ENCODE measurements at regions of chr4 and their contacts with region 1.

Region 1: DNA sequence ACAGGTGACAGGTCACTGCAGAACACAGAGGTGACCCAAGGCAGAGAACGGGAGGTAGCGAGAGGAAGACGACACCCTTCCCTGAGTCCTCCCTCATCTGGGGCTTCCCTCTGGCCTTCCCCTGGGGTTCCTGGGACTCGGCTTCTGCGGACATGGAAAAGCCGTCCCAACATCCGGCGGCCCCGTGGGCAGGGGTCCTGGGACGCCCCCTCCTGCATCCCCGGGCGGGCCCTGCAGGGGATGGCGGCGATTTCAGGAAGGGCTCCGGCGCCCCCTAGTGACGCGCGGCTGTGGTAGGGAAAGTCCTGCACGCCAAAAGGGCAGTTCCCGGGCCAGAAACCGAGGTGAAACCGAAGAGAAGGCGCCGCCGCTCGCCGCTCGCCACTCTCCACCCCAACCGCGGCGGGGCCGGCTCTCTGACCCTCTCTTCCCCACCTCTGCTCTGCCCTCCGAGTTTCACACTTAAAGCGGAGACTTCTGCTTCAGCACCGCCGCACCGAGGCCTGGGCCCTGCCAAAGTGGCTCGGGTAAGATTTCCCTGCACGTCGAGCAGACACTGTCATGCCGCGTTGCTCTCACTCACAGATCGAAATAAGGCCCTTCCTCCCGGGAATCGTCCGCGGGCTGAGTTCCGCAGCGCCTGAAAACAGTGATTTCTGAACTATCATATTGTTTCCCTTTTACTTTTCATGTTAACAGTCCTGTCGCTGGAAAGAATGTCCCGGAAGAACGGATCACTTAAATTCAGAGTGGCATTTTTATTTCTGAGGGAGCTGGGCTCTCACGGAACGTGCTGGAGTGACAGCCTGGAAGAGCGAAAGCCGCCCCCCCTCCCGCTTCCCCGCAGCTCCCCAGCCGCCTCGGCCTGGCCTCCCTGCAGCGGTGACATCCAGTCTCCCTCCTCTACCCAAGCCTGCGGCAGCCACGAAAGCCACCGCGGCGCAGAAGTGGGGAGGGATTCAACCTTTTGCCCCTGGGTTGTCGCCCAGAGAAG is 110.6 kb downstream of the DCTD start:
- DNase-seq: peak in 1 of 2 donors; percentile 80
- H3K4me3 ChIP-seq: peak overlapping the region; percentile 53 to 80
- H3K27ac ChIP-seq: peak overlapping the region in 1 of 2 donors; percentile 53
- H3K4me1 ChIP-seq: no peaks in the 10 kb centered on the region
- H3K27me3 ChIP-seq: no peaks in the 10 kb centered on the region
- CTCF ChIP-seq: peak; percentile 64 to 96 (median 76)

Region 2: GRCh38 chr4:181143250-181143854 is 1663.2 kb before region 1 on chr4:
- intact Hi-C with region 1: loop called (anchors 10 kb)
- DNase-seq: peak in 1 of 2 donors; percentile 79
- H3K4me3 ChIP-seq: no peak overlapping the region
- H3K27ac ChIP-seq: no peak overlapping the region
- H3K4me1 ChIP-seq: no peaks in the 10 kb centered on the region
- H3K27me3 ChIP-seq: no peaks in the 10 kb centered on the region
- CTCF ChIP-seq: peak; percentile 34 to 79 (median 73)

Region 3: GRCh38 chr4:182478475-182478874 is 328.1 kb before region 1 on chr4:
- intact Hi-C with region 1: loop called (anchors 1 kb)
- DNase-seq: no peak
- H3K4me3 ChIP-seq: no peak overlapping the region
- H3K27ac ChIP-seq: no peak overlapping the region
- H3K4me1 ChIP-seq: no peaks in the 10 kb centered on the region
- H3K27me3 ChIP-seq: no peaks in the 10 kb centered on the region
- CTCF ChIP-seq: peak in 2 of 3 experiments; percentile 58 to 59

Region 4: GRCh38 chr4:182795446-182796238 is 10.9 kb before region 1 on chr4:
- intact Hi-C with region 1: no loop called
- DNase-seq: no peak
- H3K4me3 ChIP-seq: no peak overlapping the region
- H3K27ac ChIP-seq: no peak overlapping the region
- H3K4me1 ChIP-seq: no peaks in the 10 kb centered on the region
- H3K27me3 ChIP-seq: no peaks in the 10 kb centered on the region
- CTCF ChIP-seq: no peak